ENCODE measurements at regions of chr19 and their contacts with region 1.

Region 1: GRCh38 chr19:43743022-43743421 is 11.7 kb downstream of the SMG9 start:
- DNase-seq: no peak
- H3K4me3 Mint-ChIP-seq: no peak overlapping the region
- H3K27ac Mint-ChIP-seq: no peak overlapping the region
- H3K4me1 Mint-ChIP-seq: peaks cover 17% of the 10 kb centered on the region
- H3K27me3 Mint-ChIP-seq: no peaks in the 10 kb centered on the region

Region 2: GRCh38 chr19:43765109-43765876 is 22.3 kb after region 1 on chr19:
- CTCF ChIA-PET with region 1: interaction called, 68 read pairs
- POLR2A ChIA-PET with region 1: no interaction called
- intact Hi-C with region 1: no loop called
- DNase-seq: peak; percentile 96
- H3K4me3 Mint-ChIP-seq: peak overlapping the region; percentile 64
- H3K27ac Mint-ChIP-seq: peak overlapping the region; percentile 99
- H3K4me1 Mint-ChIP-seq: peaks cover 82% of the 10 kb centered on the region
- H3K27me3 Mint-ChIP-seq: peaks cover 1% of the 10 kb centered on the region

Region 3: DNA sequence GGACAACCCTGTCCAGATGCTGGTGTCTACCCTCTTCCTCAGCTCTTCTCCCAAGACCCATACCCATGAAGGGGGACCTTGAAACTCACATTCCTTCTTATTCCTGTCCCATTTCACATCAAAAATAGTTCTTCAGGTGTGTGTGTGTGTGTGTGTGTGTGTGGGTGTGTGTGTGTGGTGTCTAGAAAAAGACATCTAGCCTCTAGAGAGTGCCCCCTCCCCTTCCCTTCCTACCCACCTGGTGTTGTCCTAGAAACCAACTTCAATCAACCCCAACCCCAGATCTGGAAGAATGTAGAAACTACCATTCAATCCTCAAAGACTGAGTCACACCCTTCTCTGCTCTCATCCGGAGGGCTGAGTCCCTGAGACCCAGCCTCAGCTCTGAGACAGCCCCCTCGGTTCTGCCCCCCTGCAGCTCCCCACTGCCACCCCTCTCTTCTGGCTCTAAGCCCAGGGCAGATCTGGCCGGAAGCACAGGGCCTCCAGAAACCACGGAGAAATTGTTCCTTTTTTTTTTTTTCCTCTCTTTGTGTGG is 34.2 kb after region 1 on chr19:
- CTCF ChIA-PET with region 1: interaction called, 22 read pairs
- POLR2A ChIA-PET with region 1: interaction called, 6 read pairs
- intact Hi-C with region 1: no loop called
- DNase-seq: peak; percentile 62
- H3K4me3 Mint-ChIP-seq: peak overlapping the region; percentile 80
- H3K27ac Mint-ChIP-seq: peak overlapping the region; percentile 92
- H3K4me1 Mint-ChIP-seq: peaks cover 57% of the 10 kb centered on the region
- H3K27me3 Mint-ChIP-seq: no peaks in the 10 kb centered on the region

Region 4: DNA sequence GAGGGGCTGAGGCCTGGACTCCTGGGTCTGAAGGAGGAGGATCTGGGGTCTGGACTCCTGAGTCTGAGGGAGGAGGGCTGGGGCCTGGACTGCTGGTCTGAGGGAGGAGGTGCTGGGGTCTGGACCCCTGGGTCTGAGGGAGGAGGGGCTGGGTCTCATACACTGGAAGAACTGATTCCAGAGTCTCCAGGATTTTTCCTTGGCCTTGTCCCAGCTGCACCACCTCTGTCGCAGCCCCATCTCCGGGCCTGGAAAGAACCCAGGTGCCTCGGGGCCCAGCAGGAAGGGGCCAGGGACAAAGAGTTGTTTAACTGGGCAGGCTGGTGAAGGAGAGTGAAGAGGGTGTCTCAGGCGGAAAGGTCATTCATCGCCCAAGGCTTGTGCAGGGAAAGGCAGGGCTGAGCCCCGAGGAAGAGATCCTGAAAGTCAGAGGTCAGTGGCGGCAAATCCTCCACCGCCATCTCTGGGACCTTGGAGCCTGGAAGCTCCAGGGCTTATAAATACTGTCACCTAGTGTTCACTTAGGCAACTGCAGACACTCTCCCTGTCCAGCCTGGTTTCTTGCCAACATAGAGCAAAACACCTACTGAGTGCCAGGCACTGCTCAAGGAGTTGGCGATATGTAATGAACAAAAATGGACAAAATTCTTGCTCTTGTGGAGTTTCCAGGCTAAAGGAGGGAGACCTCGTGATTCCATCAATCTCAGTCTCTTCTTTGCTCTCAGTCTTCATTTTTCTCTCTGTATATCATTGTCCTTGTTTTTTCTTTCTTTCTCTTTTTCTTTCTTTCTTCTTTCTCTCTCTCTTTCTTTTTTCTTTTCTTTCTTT is 42.2 kb after region 1 on chr19:
- CTCF ChIA-PET with region 1: interaction called, 40 read pairs
- POLR2A ChIA-PET with region 1: interaction called, 4 read pairs
- intact Hi-C with region 1: loop called (anchors 1 kb)
- DNase-seq: peak; percentile 70
- H3K4me3 Mint-ChIP-seq: peak overlapping the region; percentile 75
- H3K27ac Mint-ChIP-seq: peak overlapping the region; percentile 96
- H3K4me1 Mint-ChIP-seq: peaks cover 39% of the 10 kb centered on the region
- H3K27me3 Mint-ChIP-seq: peaks cover 1% of the 10 kb centered on the region

Region 5: GRCh38 chr19:43809762-43810696 is 67.0 kb after region 1 on chr19:
- CTCF ChIA-PET with region 1: interaction called, 68 read pairs
- POLR2A ChIA-PET with region 1: no interaction called
- intact Hi-C with region 1: loop called (anchors 1 kb)
- DNase-seq: no peak
- H3K4me3 Mint-ChIP-seq: no peak overlapping the region
- H3K27ac Mint-ChIP-seq: no peak overlapping the region
- H3K4me1 Mint-ChIP-seq: peaks cover 6% of the 10 kb centered on the region
- H3K27me3 Mint-ChIP-seq: peaks cover 4% of the 10 kb centered on the region

Region 6: DNA sequence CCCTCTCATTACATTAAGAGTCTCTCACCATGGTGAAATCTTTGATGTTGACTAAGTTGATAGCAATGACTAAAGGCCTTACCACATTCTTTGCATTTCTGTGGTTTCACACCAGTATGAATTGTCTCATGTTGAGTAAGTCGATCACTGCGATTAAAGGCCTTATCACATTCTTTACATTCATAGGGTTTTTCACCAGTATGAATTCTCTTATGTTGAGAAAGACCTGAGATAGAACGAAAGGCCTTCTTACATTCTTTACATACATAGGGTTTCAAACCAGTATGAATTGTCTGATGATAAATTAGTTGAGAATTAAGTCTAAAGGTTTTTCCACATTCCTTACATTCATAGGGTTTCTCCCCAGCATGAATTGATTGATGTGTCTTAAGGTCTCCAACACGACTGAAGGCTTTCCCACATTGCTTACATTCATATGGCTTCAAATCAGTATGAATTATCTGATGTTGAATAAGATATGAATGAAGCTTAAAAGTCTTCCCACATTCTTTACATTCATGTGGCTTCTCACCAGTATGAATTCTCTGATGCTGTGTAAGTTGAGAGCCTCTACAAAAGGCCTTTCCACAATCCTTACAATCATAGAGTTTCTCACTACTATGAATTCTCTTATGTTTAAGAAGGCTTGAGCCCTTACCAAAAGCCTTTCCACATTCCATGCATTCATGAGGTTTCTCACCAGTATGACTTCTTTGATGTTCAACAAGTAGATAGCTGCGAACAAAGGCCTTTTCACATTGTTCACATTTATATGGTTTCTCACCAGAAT is 129.7 kb after region 1 on chr19:
- CTCF ChIA-PET with region 1: no interaction called
- POLR2A ChIA-PET with region 1: no interaction called
- intact Hi-C with region 1: no loop called
- DNase-seq: no peak
- H3K4me3 Mint-ChIP-seq: no peak overlapping the region
- H3K27ac Mint-ChIP-seq: no peak overlapping the region
- H3K4me1 Mint-ChIP-seq: no peaks in the 10 kb centered on the region
- H3K27me3 Mint-ChIP-seq: no peaks in the 10 kb centered on the region

Measured in activated CD4-positive, alpha-beta memory T cell treated with anti-CD3 and anti-CD28 coated beads for 36 hours (primary cell).